GM10248 (cell line): ENCODE measurements at regions of chr3 and their contacts with region 1.

Region 1: DNA sequence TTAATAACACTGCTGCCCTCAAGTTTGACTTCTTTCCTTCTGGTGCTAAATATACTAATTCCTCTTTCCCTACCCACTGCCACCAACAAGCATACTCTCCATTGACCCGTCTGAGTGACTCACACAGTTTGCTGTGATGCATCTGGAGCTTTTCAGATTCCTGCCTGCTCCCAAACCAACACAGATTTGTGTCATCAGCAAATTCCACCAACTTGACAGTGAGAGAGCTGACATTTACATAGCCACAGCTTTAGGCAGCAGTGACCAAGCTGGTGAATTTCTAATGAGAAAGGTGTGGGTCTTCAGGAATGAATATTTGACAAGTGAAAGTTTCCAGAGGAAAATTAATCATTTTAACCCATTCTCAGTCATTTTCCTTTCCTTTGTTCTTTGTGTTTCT is 96.5 kb upstream of the PRICKLE2 start:
- DNase-seq: no peak
- CTCF ChIP-seq: no peak

Region 2: GRCh38 chr3:64308931-64309330 is 12.8 kb before region 1 on chr3:
- CTCF ChIA-PET with region 1: interaction called, 13 read pairs
- POLR2A ChIA-PET with region 1: no interaction called
- DNase-seq: no peak
- CTCF ChIP-seq: no peak